ENCODE measurements at regions of chr5 and their contacts with region 1.

Region 1: GRCh38 chr5:150637245-150638052 is 3.0 kb upstream of the SYNPO start:
- DNase-seq: no peak
- H3K4me3 ChIP-seq: no peak overlapping the region
- H3K27ac ChIP-seq: peak overlapping the region; percentile 81 to 97
- H3K4me1 ChIP-seq: peaks cover 15 to 26% of the 10 kb centered on the region in 2 donors
- H3K27me3 ChIP-seq: no peaks in the 10 kb centered on the region
- CTCF ChIP-seq: no peak
- POLR2A ChIP-seq: no peak

Region 2: DNA sequence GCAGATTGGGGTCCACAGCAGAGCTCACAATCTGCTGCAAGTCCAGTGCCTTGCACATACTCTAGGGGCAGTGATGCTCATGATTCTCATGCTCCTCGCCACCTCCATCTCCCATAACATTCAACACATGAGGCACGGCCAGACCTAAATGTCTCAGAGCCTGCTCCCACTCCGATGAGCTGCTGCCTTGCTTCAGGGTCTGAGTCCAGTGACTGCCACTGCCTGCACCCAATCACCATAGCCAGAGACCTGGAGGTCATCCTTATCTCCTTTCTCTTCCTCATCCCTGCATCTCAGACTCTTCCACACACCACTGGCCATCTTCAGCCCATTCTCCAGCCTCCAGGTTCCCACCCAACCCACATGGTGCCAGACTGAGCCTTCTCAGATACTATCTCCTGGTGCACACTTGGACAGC is 561.6 kb before region 1 on chr5:
- intact Hi-C with region 1: loop called (anchors 5 kb)
- DNase-seq: peak in 1 of 2 donors; percentile 2
- H3K4me3 ChIP-seq: no peak overlapping the region
- H3K27ac ChIP-seq: no peak overlapping the region
- H3K4me1 ChIP-seq: no peaks in the 10 kb centered on the region
- H3K27me3 ChIP-seq: no peaks in the 10 kb centered on the region
- CTCF ChIP-seq: no peak
- POLR2A ChIP-seq: no peak